ENCODE measurements at regions of chr1 and their contacts with region 1.

Region 1: DNA sequence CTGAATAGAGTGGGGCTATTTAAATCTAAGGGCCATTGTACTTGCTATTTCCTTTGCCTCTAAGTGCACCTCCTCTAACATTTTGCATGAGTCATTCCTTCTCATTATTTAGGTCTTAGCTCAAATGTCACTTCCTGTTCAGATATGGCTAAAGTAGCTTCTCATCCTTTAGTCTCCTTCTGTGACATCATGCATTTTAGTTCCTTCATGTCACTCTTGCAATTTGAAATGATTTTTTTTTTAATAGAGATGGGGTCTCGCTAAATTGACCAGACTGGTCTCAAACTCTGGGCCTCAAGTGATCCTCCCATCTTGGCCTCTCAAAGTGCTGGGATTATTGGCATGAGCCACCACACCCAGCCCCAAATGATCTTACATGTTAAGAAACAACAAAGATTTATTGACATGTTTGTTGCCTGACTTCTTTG is 6.6 kb downstream of the TBX19 start:
- DNase-seq: no peak

Region 2: GRCh38 chr1:167121375-167122120 is 1165.7 kb before region 1 on chr1:
- intact Hi-C with region 1: no loop called
- DNase-seq: peak; percentile 82

Region 3: GRCh38 chr1:167995038-167995437 is 292.2 kb before region 1 on chr1:
- intact Hi-C with region 1: no loop called
- DNase-seq: no peak

Region 4: DNA sequence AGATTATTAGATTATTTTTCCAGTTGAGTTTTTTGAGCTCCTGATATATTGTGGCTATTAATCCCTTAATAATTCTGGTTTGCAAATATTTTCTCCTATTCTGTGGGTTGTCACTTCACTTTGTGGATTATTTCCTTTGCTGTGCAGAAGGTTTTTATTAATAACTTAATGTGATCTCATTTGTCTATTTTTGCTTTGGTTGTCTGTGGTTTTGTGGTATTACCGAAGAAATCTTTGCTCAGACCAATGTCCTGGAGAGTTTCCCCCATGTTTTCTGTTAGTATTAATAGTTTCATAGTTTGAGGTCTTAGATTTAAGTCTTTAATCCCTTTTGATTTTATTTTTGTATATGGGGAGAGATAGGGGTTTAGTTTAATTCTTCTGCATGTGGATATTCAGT is 13.7 kb before region 1 on chr1:
- intact Hi-C with region 1: loop called in 1 of 2 experiments (anchors 1 kb)
- DNase-seq: no peak